GM23248 (cell line): ENCODE measurements at regions of chr4 and their contacts with region 1.

Region 1: DNA sequence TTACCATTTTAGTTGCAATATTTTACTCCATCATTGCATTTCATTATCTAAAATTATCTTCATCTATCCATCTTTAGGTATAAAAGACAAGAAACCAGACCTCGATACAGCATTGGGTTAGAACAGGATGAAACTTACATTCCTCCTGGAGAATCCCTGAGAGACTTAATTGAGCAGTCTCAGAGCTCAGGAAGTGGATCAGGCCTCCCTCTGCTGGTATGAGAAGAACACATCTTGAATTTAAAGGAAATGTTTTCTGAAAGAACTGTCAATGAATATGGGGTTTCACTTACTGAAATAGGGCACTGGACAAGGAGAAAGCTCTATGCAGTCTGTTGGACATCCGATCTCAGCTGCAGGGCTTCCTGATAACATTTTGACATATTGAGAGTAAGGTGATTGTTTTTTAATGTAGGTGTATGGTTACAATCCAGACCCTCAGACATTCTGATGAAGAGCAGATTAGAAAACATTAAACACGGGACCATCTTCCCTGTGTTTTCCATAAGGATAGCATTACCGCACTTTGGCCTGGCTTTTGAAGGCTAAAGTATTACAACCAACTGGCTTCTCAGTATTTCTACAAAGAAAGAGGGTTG is 367.2 kb downstream of the BMPR1B start:
- DNase-seq: peak; percentile 82
- H3K4me3 ChIP-seq: no peak overlapping the region
- H3K27ac ChIP-seq: no peak overlapping the region
- H3K4me1 ChIP-seq: peaks cover 8% of the 10 kb centered on the region
- H3K27me3 ChIP-seq: no peaks in the 10 kb centered on the region

Region 2: DNA sequence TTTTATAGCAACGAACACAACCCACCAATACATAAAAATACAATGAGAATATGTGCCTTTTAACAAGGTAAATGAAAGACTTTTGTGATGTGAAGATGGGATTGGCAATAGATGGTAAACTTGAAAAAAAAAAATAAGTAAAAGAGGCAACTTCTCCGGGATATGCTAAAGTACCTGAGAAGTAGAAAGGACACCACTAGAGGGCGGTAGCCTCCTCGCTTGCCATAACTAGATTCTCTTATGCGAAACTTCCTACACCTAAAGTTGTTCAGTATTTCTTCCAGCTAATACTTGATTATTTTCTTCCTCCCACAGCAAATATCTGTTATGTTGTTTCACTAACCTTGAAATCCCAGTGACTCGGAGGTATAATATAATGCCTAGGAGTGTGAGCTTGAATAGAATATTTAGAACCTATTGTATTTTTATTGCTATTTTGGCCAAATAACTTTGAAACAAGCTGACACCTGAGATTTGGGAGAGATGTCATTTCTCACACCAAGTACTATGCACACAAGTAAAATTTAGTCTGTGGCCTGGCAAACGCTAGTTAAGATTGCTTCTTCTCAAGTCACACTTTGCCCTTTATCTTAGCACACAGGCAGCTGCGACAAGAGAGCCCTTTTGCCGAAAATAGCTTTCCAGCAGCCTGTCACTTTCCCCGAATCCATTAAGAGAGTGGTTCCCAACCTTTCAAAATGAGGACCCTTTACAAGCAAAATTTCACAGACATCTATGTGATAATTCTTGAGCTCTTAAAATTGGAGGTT is 718.2 kb before region 1 on chr4:
- in situ Hi-C with region 1: loop called (anchors 25 kb)
- DNase-seq: peak; percentile 84
- H3K4me3 ChIP-seq: no peak overlapping the region
- H3K27ac ChIP-seq: no peak overlapping the region
- H3K4me1 ChIP-seq: peaks cover 36% of the 10 kb centered on the region
- H3K27me3 ChIP-seq: no peaks in the 10 kb centered on the region